ENCODE measurements at regions of chr1 and their contacts with region 1.

Region 1: GRCh38 chr1:26602378-26602959 is 72.9 kb downstream of the RPS6KA1 start:
- DNase-seq: peak; percentile 46 to 63
- H3K4me3 ChIP-seq: no peak overlapping the region
- H3K4me3 Mint-ChIP-seq: no peak overlapping the region
- H3K27ac Mint-ChIP-seq: no peak overlapping the region
- H3K4me1 ChIP-seq: no peaks in the 10 kb centered on the region
- H3K4me1 Mint-ChIP-seq: no peaks in the 10 kb centered on the region
- H3K27me3 ChIP-seq: no peaks in the 10 kb centered on the region
- H3K27me3 Mint-ChIP-seq: no peaks in the 10 kb centered on the region
- CTCF ChIP-seq: peak; percentile 55 to 60

Region 2: DNA sequence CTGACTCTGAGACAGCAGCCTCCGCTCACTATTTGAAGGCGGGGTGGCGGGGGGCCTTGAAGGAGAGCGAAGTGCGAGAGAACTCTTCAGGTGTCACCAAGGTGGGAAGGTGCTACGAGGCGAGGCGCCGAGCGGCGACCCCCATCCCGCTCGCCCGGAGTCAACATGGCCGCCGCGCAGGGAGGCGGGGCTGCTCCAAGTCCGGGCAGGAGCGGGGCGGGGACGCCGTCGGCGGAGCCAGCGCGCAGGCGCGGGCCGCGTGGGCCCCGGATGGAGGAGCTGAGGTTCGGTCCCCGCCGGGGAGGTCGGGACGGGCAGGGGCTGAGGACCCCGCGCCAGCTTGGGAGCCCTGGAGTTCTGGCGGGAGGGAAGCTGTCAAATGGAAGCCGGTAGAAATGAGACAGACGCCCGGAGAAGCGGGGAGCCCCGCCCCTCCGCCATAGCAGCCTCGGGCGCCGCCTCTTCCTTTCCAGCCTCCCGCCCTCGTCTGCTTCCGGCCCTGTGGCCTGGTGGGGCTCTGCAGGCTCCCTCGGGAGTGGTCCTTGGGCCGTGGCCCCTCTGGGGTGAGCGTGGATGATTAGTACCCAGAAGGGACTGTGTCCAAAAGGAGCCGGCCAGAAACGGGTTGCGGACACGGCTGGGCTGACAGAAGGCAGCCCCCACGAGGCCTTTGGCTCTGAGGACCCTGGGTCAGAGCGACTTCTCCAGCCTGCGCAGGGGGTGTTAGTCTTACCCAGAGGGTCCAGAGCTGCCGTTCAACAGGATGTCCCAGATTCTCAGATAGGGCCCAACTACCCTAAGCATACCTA is 185.4 kb after region 1 on chr1 and contains the start of gene PIGV:
- CTCF ChIA-PET with region 1: interaction called, 15 read pairs
- POLR2A ChIA-PET with region 1: no interaction called
- intact Hi-C with region 1: loop called (anchors 1 kb)
- DNase-seq: peak; percentile 82 to 89
- H3K4me3 ChIP-seq: peak within 1 kb of the TSS; percentile 77
- H3K4me3 Mint-ChIP-seq: peak within 1 kb of the TSS; percentile 87
- H3K27ac Mint-ChIP-seq: peak within 1 kb of the TSS; percentile 90
- H3K4me1 ChIP-seq: peaks cover 44% of the 10 kb centered on the region
- H3K4me1 Mint-ChIP-seq: peaks cover 30% of the 10 kb centered on the region
- H3K27me3 ChIP-seq: no peaks in the 10 kb centered on the region
- H3K27me3 Mint-ChIP-seq: no peaks in the 10 kb centered on the region
- CTCF ChIP-seq: no peak
- total RNA-seq, gene PIGV: 10.0 and 12.3 TPM in 2 replicates

Measured in Caco-2 (cell line).